PC-9 (cell line): ENCODE measurements at regions of chr2 and their contacts with region 1.

Region 1: GRCh38 chr2:112891385-112891831 is 19.6 kb upstream of the IL37 start:
- DNase-seq: peak; percentile 88 to 95
- H3K4me3 ChIP-seq: no peak overlapping the region
- H3K27ac ChIP-seq: peak overlapping the region; percentile 95
- H3K4me1 ChIP-seq: peaks cover 17% of the 10 kb centered on the region
- H3K27me3 ChIP-seq: no peaks in the 10 kb centered on the region
- CTCF ChIP-seq: 0 out of 2 replicates have a peak, but pooled peaks have one; percentile 11

Region 2: GRCh38 chr2:112936927-112937232 is 45.5 kb after region 1 on chr2:
- CTCF ChIA-PET with region 1: interaction called, 5 read pairs
- POLR2A ChIA-PET with region 1: no interaction called
- intact Hi-C with region 1: loop called (anchors 1 kb)
- DNase-seq: no peak
- H3K4me3 ChIP-seq: no peak overlapping the region
- H3K27ac ChIP-seq: peak overlapping the region; percentile 47; the same call in 1 of the 2 replicates
- H3K4me1 ChIP-seq: peaks cover 17% of the 10 kb centered on the region
- H3K27me3 ChIP-seq: no peaks in the 10 kb centered on the region
- CTCF ChIP-seq: no peak

Region 3: DNA sequence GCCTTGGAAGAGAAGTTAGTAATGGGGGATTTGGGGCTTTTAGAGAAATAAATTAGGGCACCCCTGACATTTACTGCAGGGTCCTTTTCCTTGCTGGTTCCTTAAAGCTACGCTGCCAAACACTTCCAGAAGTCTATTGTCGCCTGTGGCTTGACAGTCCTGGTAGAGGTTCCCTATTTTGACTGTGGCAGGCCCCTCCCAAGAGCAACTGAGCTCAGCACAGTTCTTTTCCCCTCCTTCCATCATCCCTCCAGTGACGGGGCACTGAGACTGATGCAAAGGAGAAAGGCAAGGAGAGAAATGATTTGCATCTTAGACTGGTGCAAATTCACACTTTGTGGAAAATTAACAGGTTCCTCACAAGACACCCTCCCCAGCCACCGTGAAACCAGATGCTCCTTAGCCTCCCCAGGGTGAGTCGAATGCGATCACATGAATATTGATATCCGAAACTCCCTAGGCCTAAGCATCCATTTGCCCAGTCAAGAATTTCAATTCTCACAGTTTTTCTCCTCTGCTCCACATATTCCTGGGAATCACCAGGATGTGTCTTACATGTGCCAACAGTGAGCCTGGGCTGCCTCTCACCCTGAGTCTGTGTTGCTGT is 781.0 kb after region 1 on chr2:
- CTCF ChIA-PET with region 1: no interaction called
- POLR2A ChIA-PET with region 1: no interaction called
- intact Hi-C with region 1: no loop called
- DNase-seq: peak in 1 of 2 experiments; percentile 27
- H3K4me3 ChIP-seq: no peak overlapping the region
- H3K27ac ChIP-seq: no peak overlapping the region
- H3K4me1 ChIP-seq: no peaks in the 10 kb centered on the region
- H3K27me3 ChIP-seq: 0 out of 2 replicates have a peak, but pooled peaks cover 3% of the 10 kb centered on the region
- CTCF ChIP-seq: no peak